Activated CD8-positive, alpha-beta T cell treated with anti-CD3 and anti-CD28 coated beads for 36 hours (primary cell): ENCODE measurements at regions of chr1 and their contacts with region 1.

Region 1: GRCh38 chr1:171654942-171655745 is 2.7 kb upstream of the MYOC start:
- DNase-seq: peak; percentile 90
- ATAC-seq: peak; percentile 89
- H3K4me3 Mint-ChIP-seq: no peak overlapping the region
- H3K27ac Mint-ChIP-seq: no peak overlapping the region
- H3K4me1 Mint-ChIP-seq: peaks cover 9% of the 10 kb centered on the region
- H3K27me3 Mint-ChIP-seq: peaks cover 11% of the 10 kb centered on the region
- CTCF ChIP-seq: peak; percentile 83

Region 2: GRCh38 chr1:171715813-171716251 is 60.7 kb after region 1 on chr1:
- CTCF ChIA-PET with region 1: interaction called, 9 read pairs
- POLR2A ChIA-PET with region 1: no interaction called
- intact Hi-C with region 1: loop called (anchors 10 kb)
- DNase-seq: no peak
- ATAC-seq: no peak
- H3K4me3 Mint-ChIP-seq: no peak overlapping the region
- H3K27ac Mint-ChIP-seq: no peak overlapping the region
- H3K4me1 Mint-ChIP-seq: peaks cover 7% of the 10 kb centered on the region
- H3K27me3 Mint-ChIP-seq: no peaks in the 10 kb centered on the region
- CTCF ChIP-seq: peak; percentile 58